ENCODE measurements at regions of chr6 and their contacts with region 1.

Region 1: DNA sequence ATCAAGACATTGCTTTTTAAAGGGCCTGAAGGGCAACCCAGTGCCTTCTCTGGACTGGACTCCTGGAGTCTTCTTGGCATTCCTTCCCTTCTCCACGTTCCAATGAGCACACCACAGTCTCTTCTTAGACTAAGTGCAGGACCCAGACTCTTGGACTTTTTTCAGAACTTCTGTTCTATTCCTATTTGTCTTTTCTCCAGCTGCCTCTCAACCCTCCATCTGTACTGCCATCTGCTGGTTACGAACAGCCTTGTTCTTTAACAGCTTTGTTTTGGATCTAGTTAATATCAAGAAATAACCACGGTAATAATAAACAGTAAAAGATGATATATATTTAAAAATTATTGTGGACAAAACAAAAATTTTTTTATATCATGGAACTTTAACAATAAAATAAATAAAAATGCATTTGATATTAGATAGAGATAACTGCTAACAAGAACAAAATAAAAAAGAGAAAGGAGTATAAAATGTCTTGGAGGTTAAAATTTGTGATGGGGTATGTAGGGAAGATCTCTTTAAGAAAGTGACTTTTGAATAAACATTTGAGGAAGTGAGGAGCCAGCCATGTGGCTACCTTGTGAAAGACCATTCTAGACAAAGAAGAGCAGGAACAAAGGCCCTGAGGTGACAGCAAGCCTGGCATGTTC is 105.1 kb upstream of the HCRTR2 start:
- H3K4me3 Mint-ChIP-seq: no peak overlapping the region
- H3K27ac Mint-ChIP-seq: no peak overlapping the region
- H3K4me1 Mint-ChIP-seq: peaks cover 5% of the 10 kb centered on the region
- H3K27me3 Mint-ChIP-seq: no peaks in the 10 kb centered on the region

Region 2: DNA sequence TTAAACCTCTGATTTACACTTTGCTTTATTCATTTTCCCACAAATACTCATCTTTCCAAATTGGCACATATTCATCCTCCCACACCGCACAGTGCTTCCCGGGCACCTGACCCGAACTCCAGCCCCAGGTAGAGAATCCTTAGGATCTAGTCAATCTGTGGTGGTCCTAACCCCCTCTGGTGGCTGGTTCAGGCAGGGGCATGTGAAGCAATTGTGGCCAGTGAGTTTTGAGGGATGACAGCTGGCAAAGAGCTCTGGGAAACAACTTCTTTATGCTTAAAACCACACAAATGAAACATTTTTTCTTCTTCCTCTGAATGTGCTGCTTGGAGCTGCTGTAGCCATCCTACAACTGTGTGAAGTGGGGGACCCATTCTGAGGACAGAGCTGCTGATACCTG is 1775.2 kb before region 1 on chr6:
- intact Hi-C with region 1: no loop called
- H3K4me3 Mint-ChIP-seq: no peak overlapping the region
- H3K27ac Mint-ChIP-seq: no peak overlapping the region
- H3K4me1 Mint-ChIP-seq: peaks cover 26% of the 10 kb centered on the region
- H3K27me3 Mint-ChIP-seq: no peaks in the 10 kb centered on the region

Region 3: GRCh38 chr6:54717849-54718455 is 351.3 kb before region 1 on chr6:
- intact Hi-C with region 1: loop called (anchors 1 kb)
- H3K4me3 Mint-ChIP-seq: no peak overlapping the region
- H3K27ac Mint-ChIP-seq: no peak overlapping the region
- H3K4me1 Mint-ChIP-seq: no peaks in the 10 kb centered on the region
- H3K27me3 Mint-ChIP-seq: no peaks in the 10 kb centered on the region

Region 4: DNA sequence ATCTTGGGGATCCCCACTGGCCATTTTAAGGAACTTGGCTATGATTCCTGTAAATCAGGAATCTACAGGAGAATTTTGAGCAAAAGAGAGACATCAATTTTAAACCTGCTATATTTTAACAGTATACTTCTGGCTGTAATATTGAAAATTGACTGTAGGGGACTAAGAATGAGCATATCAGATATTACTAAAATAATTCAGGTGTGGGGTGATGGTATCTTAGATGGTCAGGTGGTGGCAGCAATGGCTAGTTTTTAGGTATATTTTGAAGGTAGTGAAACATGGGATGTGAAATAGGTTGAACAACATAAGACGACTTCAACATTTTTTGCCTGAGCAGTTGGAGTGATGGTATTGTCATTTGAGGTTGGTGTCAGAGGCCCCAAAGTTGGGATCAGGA is 190.6 kb before region 1 on chr6:
- intact Hi-C with region 1: loop called (anchors 10 kb)
- H3K4me3 Mint-ChIP-seq: no peak overlapping the region
- H3K27ac Mint-ChIP-seq: no peak overlapping the region
- H3K4me1 Mint-ChIP-seq: no peaks in the 10 kb centered on the region
- H3K27me3 Mint-ChIP-seq: no peaks in the 10 kb centered on the region

Region 5: GRCh38 chr6:55011034-55011433 is 58.2 kb before region 1 on chr6:
- intact Hi-C with region 1: loop called (anchors 1 kb)
- H3K4me3 Mint-ChIP-seq: no peak overlapping the region
- H3K27ac Mint-ChIP-seq: no peak overlapping the region
- H3K4me1 Mint-ChIP-seq: no peaks in the 10 kb centered on the region
- H3K27me3 Mint-ChIP-seq: no peaks in the 10 kb centered on the region

Measured in dendritic cell treated with granulocyte-macrophage colony-stimulating factor and Interleukin-4, amounts not matched to agents 40 ng/mL and 50 ng/mL, for 4 days (primary cell).